ENCODE measurements at regions of chr1 and their contacts with region 1.

Region 1: GRCh38 chr1:27357281-27358037 is 9.3 kb downstream of the MAP3K6 start:
- DNase-seq: peak; percentile 50 to 71
- H3K4me3 ChIP-seq: no peak overlapping the region
- H3K4me3 Mint-ChIP-seq: no peak overlapping the region
- H3K27ac Mint-ChIP-seq: no peak overlapping the region
- H3K4me1 ChIP-seq: no peaks in the 10 kb centered on the region
- H3K4me1 Mint-ChIP-seq: no peaks in the 10 kb centered on the region
- H3K27me3 ChIP-seq: no peaks in the 10 kb centered on the region
- H3K27me3 Mint-ChIP-seq: no peaks in the 10 kb centered on the region
- CTCF ChIP-seq: peak; percentile 79 to 83

Region 2: GRCh38 chr1:27392096-27392777 is 34.8 kb after region 1 on chr1 and contains the start of gene GPR3:
- CTCF ChIA-PET with region 1: interaction called, 5 read pairs
- POLR2A ChIA-PET with region 1: no interaction called
- intact Hi-C with region 1: loop called (anchors 1 kb)
- DNase-seq: peak; percentile 90
- H3K4me3 ChIP-seq: peak within 1 kb of the TSS; percentile 42
- H3K4me3 Mint-ChIP-seq: peak within 1 kb of the TSS; percentile 73
- H3K27ac Mint-ChIP-seq: peak within 1 kb of the TSS; percentile 62
- H3K4me1 ChIP-seq: no peaks in the 10 kb centered on the region
- H3K4me1 Mint-ChIP-seq: peaks cover 7% of the 10 kb centered on the region
- H3K27me3 ChIP-seq: no peaks in the 10 kb centered on the region
- H3K27me3 Mint-ChIP-seq: no peaks in the 10 kb centered on the region
- CTCF ChIP-seq: peak; percentile 34 to 86
- total RNA-seq, gene GPR3: 0.91 and 1.2 TPM in 2 replicates

Measured in Caco-2 (cell line).